ENCODE measurements at regions of chr1 and their contacts with region 1.

Region 1: DNA sequence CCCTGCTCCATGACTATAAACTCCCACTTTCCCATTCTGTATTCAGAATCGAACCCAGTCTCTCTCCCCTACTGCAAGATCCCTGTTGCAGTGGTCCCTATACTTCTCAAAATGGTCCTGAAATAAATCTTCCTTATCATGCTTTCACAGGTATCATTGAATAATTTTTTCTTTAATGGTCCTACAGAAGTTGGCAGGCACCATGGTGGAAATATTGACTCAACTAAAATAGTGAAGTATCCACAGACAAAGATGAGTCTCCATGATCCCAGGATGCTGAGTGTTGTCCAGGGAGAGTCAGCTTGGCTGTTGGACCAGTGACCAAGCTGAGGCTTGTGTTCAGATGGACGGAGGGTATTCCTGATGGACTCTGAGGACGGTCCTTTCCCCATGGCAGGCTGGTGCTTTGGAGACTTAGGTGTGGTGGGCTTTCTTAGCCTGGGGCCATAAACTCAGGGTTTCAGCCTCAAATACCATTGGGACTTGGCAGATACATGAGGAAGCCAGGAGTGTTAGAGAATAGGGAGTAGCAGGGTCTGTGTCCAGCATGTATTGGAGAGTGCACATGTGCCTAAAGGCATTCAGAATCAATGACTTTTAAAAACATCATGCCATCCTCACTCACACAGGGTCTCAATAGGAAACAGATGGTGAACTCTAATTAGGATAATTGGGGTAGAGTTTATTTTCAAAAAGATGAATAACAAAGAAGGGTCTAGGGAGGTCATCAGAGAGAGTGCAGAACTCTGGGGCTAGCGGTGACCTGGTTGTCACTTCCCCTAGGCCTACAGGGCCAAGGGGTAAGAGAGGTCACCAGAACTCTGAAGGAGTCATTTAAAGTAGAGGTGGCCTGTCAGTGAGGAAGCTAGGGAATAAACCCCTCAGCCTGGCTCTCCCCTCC is 19.8 kb downstream of the TINAGL1 start:
- DNase-seq: no peak
- ATAC-seq: no peak
- H3K4me3 ChIP-seq: no peak overlapping the region
- H3K4me1 ChIP-seq: no peaks in the 10 kb centered on the region
- CTCF ChIP-seq: no peak

Region 2: GRCh38 chr1:31239653-31240241 is 356.3 kb before region 1 on chr1 and contains the start of gene NKAIN1:
- intact Hi-C with region 1: no loop called
- DNase-seq: peak in 2 of 3 donors; percentile 21 to 50
- ATAC-seq: peak; percentile 65
- H3K4me3 ChIP-seq: no peak within 1 kb of the TSS
- H3K4me1 ChIP-seq: peaks cover 8% of the 10 kb centered on the region
- CTCF ChIP-seq: no peak
- total RNA-seq, gene NKAIN1: 0.35 TPM in 1 of 3 donors, not detected in the others

Region 3: GRCh38 chr1:31564134-31564989 is 31.7 kb before region 1 on chr1:
- intact Hi-C with region 1: loop called in 1 of 2 experiments (anchors 5 kb)
- DNase-seq: peak in 1 of 3 donors; percentile 84
- ATAC-seq: peak; percentile 87
- H3K4me3 ChIP-seq: no peak overlapping the region
- H3K4me1 ChIP-seq: peaks cover 12% of the 10 kb centered on the region
- CTCF ChIP-seq: peak; percentile 53

Region 4: DNA sequence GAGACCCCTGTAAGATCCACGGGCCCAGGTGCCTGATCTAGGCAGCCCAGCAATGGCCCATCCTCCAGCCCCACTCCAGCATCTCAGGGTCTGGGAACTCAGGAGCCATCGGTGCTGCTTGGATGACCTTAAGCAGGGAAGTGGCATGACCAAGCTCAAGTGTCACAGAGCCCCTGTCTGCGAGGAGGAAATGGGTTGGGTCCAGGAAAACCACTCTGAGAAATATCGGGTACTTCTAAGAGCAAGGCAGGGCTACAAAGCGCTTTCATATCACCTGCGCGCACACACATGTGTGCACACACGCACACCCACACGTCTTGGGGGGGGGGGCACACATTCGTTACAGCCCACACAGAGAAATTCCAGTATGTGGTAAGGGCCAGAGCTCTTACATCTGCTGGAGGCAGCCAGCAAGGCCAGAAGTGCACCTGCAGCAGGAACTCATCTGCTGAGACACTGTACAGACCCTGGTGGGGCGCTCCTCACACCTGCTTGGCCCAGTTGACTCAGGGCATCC is 252.4 kb after region 1 on chr1:
- intact Hi-C with region 1: no loop called
- DNase-seq: no peak
- ATAC-seq: peak; percentile 61
- H3K4me3 ChIP-seq: no peak overlapping the region
- H3K4me1 ChIP-seq: no peaks in the 10 kb centered on the region
- CTCF ChIP-seq: no peak

Measured in mucosa of descending colon (tissue), 3 donors.